BJ (cell line): ENCODE measurements at regions of chr13 and their contacts with region 1.

Region 1: GRCh38 chr13:77026818-77027585 is at the start of gene FBXL3:
- DNase-seq: peak; percentile 58
- H3K4me3 ChIP-seq: peak within 1 kb of the TSS; percentile 89
- H3K27me3 ChIP-seq: no peaks in the 10 kb centered on the region
- CTCF ChIP-seq: no peak
- polyA plus RNA-seq, gene FBXL3: 22.0 and 35.9 TPM in 2 replicates

Region 2: GRCh38 chr13:75788481-75788981 is 1238.5 kb before region 1 on chr13:
- CTCF ChIA-PET with region 1: no interaction called
- POLR2A ChIA-PET with region 1: interaction called, 12 read pairs
- DNase-seq: peak; percentile 96
- H3K4me3 ChIP-seq: no peak overlapping the region
- H3K27me3 ChIP-seq: no peaks in the 10 kb centered on the region
- CTCF ChIP-seq: no peak

Region 3: GRCh38 chr13:76783798-76784197 is 243.2 kb before region 1 on chr13:
- CTCF ChIA-PET with region 1: no interaction called
- POLR2A ChIA-PET with region 1: no interaction called
- DNase-seq: no peak
- H3K4me3 ChIP-seq: no peak overlapping the region
- H3K27me3 ChIP-seq: no peaks in the 10 kb centered on the region
- CTCF ChIP-seq: no peak

Region 4: GRCh38 chr13:77009011-77009410 is 18.0 kb before region 1 on chr13:
- CTCF ChIA-PET with region 1: no interaction called
- POLR2A ChIA-PET with region 1: no interaction called
- DNase-seq: no peak
- H3K4me3 ChIP-seq: no peak overlapping the region
- H3K27me3 ChIP-seq: no peaks in the 10 kb centered on the region
- CTCF ChIP-seq: no peak

Region 5: GRCh38 chr13:77065461-77066147 is 38.6 kb after region 1 on chr13:
- CTCF ChIA-PET with region 1: no interaction called
- POLR2A ChIA-PET with region 1: interaction called, 11 read pairs
- DNase-seq: no peak
- H3K4me3 ChIP-seq: no peak overlapping the region
- H3K27me3 ChIP-seq: no peaks in the 10 kb centered on the region
- CTCF ChIP-seq: no peak